Mammary epithelial cell (primary cell): ENCODE measurements at regions of chr3 and their contacts with region 1.

Region 1: GRCh38 chr3:87503900-87504508 is 227.6 kb upstream of the POU1F1 start:
- DNase-seq: peak; percentile 70
- H3K4me3 ChIP-seq: no peak overlapping the region
- H3K27ac ChIP-seq: no peak overlapping the region
- H3K4me1 ChIP-seq: no peaks in the 10 kb centered on the region
- H3K27me3 ChIP-seq: no peaks in the 10 kb centered on the region
- CTCF ChIP-seq: peak; percentile 81 to 90

Region 2: DNA sequence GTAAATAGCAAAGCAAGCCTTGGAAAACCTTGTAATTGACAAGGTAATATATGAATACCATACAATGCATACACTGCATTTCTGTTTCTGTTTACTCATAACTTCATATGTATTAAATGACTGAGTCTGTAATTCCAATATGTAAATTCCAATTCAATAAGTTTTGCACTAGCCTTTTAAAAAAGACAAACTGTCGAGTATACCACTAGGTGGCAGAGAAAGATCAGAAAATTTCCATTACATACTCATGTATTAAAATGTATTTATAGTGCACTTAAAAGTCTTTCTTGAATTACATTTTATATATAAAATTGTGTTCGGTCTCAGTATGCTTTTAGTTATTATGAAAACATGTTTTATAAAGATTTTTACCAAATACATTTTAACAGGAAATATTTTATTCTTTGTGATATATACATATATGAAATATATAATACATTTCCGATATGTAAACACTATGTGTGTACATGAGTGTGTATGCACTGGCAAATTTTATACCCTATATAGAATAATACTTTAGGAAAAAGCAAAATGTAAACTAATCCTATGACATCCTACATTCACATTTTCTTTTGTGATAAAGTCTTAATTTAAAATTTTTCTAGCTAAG is 729.8 kb before region 1 on chr3:
- CTCF ChIA-PET with region 1: no interaction called
- dilution Hi-C with region 1: no loop called
- in situ Hi-C with region 1: no loop called
- intact Hi-C with region 1: loop called (anchors 10 kb)
- DNase-seq: peak; percentile 18
- H3K4me3 ChIP-seq: no peak overlapping the region
- H3K27ac ChIP-seq: no peak overlapping the region
- H3K4me1 ChIP-seq: no peaks in the 10 kb centered on the region
- H3K27me3 ChIP-seq: no peaks in the 10 kb centered on the region
- CTCF ChIP-seq: peak; percentile 32 to 53

Region 3: DNA sequence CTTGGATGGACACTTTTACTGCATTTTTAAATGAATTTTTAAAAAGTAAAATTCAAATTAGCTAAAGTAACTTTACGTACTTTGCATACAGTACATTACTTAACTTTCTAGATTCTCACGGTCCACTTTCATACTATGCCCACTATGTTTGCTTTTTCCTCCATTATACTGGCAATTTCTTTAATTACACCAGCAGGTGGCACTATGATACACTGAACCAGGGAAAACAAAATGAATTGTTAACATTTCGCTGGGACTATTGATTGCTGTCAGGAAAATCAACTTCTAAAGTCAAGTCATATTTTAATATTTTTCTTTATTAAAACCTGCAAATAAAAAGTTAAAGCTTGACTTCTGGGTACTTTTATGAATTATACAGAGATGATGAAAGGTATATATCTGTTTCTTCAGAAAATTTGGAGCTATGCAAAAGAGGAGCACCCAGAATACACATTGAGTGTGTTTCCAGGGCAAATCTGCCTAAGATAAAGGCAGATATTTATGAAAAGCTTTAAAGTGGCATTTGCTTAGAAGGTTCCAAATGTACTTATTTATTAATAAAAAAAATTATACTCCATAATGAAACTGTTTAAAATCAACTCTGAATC is 205.8 kb before region 1 on chr3:
- CTCF ChIA-PET with region 1: no interaction called
- dilution Hi-C with region 1: no loop called
- in situ Hi-C with region 1: loop called (anchors 5 to 10 kb)
- intact Hi-C with region 1: loop called (anchors 1 kb)
- DNase-seq: peak; percentile 22
- H3K4me3 ChIP-seq: no peak overlapping the region
- H3K27ac ChIP-seq: no peak overlapping the region
- H3K4me1 ChIP-seq: no peaks in the 10 kb centered on the region
- H3K27me3 ChIP-seq: peaks cover 4% of the 10 kb centered on the region
- CTCF ChIP-seq: peak; percentile 62 to 66

Region 4: DNA sequence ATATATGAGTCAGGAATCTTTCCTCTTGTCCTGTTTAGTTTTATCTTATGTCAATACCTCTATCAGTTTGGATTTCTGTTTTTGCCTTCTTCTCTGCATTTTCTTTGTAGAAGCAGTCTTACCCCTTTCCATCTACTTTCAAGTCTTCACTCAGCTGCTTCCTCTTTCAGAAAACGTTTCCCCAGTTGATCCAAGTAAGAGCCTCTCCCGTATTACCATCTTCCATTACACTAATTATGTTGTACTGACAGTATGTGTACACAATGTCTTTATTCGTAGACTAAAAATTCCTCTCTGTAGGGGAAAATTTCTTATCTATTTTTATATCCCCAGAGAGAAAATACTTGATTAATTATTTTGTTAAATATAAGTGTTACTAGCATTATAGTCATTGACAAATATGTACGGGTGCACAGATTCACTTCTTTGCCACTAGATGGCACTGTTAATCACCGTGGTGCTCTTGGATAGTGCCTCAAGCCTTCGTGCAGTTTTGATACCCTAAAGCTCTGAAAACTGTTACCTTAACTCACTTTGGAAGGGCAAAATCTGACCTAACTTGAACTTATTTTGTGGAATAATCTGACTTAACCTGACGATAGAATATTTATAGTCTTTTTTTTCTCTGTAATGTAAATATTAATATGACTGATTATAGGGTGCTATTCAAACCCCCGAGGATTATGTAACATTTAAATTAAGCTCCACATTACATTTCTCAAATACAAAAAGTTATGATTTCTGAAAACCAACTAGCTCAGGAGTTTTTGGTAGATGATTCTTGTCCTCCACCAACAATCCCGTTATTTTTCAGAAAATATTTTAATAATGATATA is 153.4 kb before region 1 on chr3:
- CTCF ChIA-PET with region 1: interaction called, 3 read pairs
- dilution Hi-C with region 1: no loop called
- in situ Hi-C with region 1: loop called in 1 of 2 experiments (anchors 10 kb)
- intact Hi-C with region 1: loop called (anchors 1 kb)
- DNase-seq: peak; percentile 38
- H3K4me3 ChIP-seq: no peak overlapping the region
- H3K27ac ChIP-seq: no peak overlapping the region
- H3K4me1 ChIP-seq: no peaks in the 10 kb centered on the region
- H3K27me3 ChIP-seq: no peaks in the 10 kb centered on the region
- CTCF ChIP-seq: peak; percentile 83 to 91

Region 5: GRCh38 chr3:87397210-87397609 is 106.8 kb before region 1 on chr3:
- CTCF ChIA-PET with region 1: no interaction called
- dilution Hi-C with region 1: no loop called
- in situ Hi-C with region 1: no loop called
- intact Hi-C with region 1: no loop called
- DNase-seq: no peak
- H3K4me3 ChIP-seq: no peak overlapping the region
- H3K27ac ChIP-seq: no peak overlapping the region
- H3K4me1 ChIP-seq: no peaks in the 10 kb centered on the region
- H3K27me3 ChIP-seq: no peaks in the 10 kb centered on the region
- CTCF ChIP-seq: no peak

Region 6: GRCh38 chr3:88003115-88003755 is 499.2 kb after region 1 on chr3:
- CTCF ChIA-PET with region 1: interaction called, 4 read pairs
- dilution Hi-C with region 1: no loop called
- in situ Hi-C with region 1: no loop called
- intact Hi-C with region 1: loop called (anchors 5 kb)
- DNase-seq: peak; percentile 29
- H3K4me3 ChIP-seq: no peak overlapping the region
- H3K27ac ChIP-seq: no peak overlapping the region
- H3K4me1 ChIP-seq: peaks cover 3% of the 10 kb centered on the region
- H3K27me3 ChIP-seq: no peaks in the 10 kb centered on the region
- CTCF ChIP-seq: peak; percentile 69 to 75